ENCODE measurements at regions of chr7 and their contacts with region 1.

Region 1: GRCh38 chr7:105759670-105760550 is 116.5 kb downstream of the ATXN7L1 start:
- DNase-seq: peak; percentile 40
- ATAC-seq: no peak
- H3K4me3 Mint-ChIP-seq: no peak overlapping the region
- H3K27ac Mint-ChIP-seq: no peak overlapping the region
- H3K4me1 Mint-ChIP-seq: peaks cover 26% of the 10 kb centered on the region
- H3K27me3 Mint-ChIP-seq: no peaks in the 10 kb centered on the region
- CTCF ChIP-seq: peak; percentile 82

Region 2: GRCh38 chr7:105769901-105770628 is 10.2 kb after region 1 on chr7:
- CTCF ChIA-PET with region 1: interaction called, 13 read pairs
- POLR2A ChIA-PET with region 1: no interaction called
- intact Hi-C with region 1: no loop called
- DNase-seq: peak; percentile 13
- ATAC-seq: peak; percentile 49
- H3K4me3 Mint-ChIP-seq: no peak overlapping the region
- H3K27ac Mint-ChIP-seq: no peak overlapping the region
- H3K4me1 Mint-ChIP-seq: peaks cover 13% of the 10 kb centered on the region
- H3K27me3 Mint-ChIP-seq: no peaks in the 10 kb centered on the region
- CTCF ChIP-seq: no peak

Region 3: GRCh38 chr7:106009403-106010226 is 249.7 kb after region 1 on chr7:
- CTCF ChIA-PET with region 1: interaction called, 12 read pairs
- POLR2A ChIA-PET with region 1: interaction called, 3 read pairs
- intact Hi-C with region 1: loop called (anchors 5 kb)
- DNase-seq: peak; percentile 86
- ATAC-seq: peak; percentile 99
- H3K4me3 Mint-ChIP-seq: no peak overlapping the region
- H3K27ac Mint-ChIP-seq: no peak overlapping the region
- H3K4me1 Mint-ChIP-seq: peaks cover 25% of the 10 kb centered on the region
- H3K27me3 Mint-ChIP-seq: peaks cover 2% of the 10 kb centered on the region
- CTCF ChIP-seq: peak; percentile 99

Region 4: DNA sequence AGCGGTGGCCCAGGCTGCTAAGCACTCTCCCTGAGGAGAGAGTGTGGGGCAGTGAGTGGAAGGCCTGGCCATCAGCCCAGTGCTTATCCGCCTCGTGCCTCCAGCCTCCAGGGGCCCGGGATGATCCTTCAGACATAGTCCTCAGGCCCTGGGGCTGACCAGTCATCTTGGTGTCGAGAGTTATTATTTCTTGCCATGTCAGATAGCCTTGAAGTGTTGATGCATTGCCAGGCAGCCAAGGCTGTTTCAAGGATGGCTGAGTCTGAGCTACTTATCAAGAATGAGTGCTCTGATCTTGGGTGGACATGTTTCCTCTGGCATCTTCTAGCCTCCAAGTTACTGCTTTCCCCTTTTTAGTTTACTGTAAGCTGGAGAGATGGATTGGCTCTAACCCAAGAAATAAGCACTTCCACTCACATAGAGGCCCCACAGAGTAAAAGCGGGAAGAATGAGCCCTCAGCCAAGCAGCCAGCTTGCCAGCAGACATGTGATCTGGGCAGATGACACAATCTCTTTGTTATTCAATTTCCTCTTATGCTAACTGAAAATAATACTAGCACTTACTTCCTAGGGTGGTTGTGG is 661.4 kb after region 1 on chr7:
- CTCF ChIA-PET with region 1: no interaction called
- POLR2A ChIA-PET with region 1: no interaction called
- intact Hi-C with region 1: no loop called
- DNase-seq: no peak
- ATAC-seq: no peak
- H3K4me3 Mint-ChIP-seq: no peak overlapping the region
- H3K27ac Mint-ChIP-seq: peak overlapping the region; percentile 91
- H3K4me1 Mint-ChIP-seq: peaks cover 86% of the 10 kb centered on the region
- H3K27me3 Mint-ChIP-seq: peaks cover 3% of the 10 kb centered on the region
- CTCF ChIP-seq: no peak

Measured in activated CD8-positive, alpha-beta T cell treated with anti-CD3 and anti-CD28 coated beads for 36 hours (primary cell).